MCF 10A (cell line): ENCODE measurements at regions of chr12 and their contacts with region 1.

Region 1: DNA sequence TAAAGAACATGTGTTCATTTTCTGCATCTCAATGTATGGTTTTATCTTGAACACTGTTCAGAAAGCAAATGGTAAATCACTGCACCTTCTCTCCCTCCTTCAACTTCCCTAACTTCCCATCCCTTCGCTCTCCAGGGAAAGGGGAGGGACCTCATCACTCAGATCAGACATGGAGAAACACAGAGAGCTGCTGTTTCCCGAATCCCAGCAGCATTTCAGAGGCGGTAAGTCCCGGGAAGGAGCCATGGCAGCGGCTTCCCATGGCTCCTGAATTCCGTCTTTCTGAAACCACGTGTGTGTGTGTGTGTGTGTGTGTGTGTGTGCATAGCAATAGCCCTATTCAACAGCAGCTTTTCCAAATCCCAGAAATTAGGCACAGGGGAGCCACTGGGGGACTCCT is 125.4 kb upstream of the TMCC3 start:
- DNase-seq: no peak
- H3K4me3 Mint-ChIP-seq: no peak overlapping the region
- H3K27ac Mint-ChIP-seq: no peak overlapping the region
- H3K4me1 Mint-ChIP-seq: peaks cover 6% of the 10 kb centered on the region
- H3K27me3 Mint-ChIP-seq: peaks cover 39% of the 10 kb centered on the region
- CTCF ChIP-seq: no peak

Region 2: DNA sequence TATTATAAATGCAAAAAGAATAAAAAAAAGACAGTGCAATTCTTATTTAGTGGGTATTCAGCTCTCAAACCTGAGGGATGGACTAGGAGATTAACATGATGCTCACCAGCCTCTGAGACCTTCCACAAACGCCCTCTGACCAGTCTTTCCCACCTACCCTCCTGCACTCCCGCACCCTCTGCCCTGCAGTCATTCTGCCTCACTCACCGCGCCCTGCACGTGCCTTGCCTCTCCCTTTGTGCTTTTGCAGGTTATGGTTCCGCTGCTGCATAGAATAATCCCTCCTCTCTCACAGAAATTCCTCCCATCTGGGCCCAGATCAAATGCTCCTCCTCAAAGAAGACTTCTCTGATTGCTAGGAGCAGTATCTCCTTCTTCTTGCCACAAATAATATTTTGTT is 96.9 kb before region 1 on chr12:
- CTCF ChIA-PET with region 1: no interaction called
- POLR2A ChIA-PET with region 1: no interaction called
- intact Hi-C with region 1: no loop called
- DNase-seq: no peak
- H3K4me3 Mint-ChIP-seq: no peak overlapping the region
- H3K27ac Mint-ChIP-seq: no peak overlapping the region
- H3K4me1 Mint-ChIP-seq: no peaks in the 10 kb centered on the region
- H3K27me3 Mint-ChIP-seq: no peaks in the 10 kb centered on the region
- CTCF ChIP-seq: no peak

Region 3: DNA sequence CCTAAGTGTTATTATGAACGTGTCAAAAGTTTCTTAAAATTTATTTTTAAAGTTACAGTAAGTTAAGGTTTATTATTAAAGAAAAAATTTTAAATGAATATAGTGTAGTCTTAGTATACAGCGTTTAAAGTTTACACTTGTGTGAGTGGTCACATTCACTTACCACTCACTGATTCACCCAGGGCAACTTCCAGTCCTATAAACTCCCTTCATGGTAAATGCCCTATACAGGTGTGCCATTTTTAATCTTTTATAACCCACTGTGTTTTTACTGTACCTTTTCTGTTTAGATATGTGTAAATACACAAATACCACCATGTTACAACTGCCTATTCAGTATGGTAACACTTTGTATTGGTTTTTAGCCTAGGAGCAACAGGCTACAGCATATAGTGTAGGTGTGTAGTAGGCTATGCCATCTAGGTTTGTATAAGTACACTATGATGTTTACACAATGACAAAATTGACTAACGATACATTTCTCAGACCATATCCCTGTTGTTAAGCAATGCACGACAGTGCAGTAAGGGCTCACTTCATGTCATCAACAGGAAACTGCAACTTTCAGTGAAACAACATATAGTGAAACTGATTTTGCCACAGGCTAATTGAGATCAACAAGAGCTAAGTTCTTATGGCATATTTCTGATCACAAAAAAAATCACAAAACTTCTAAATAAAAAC is 13.3 kb before region 1 on chr12:
- CTCF ChIA-PET with region 1: interaction called, 12 read pairs
- POLR2A ChIA-PET with region 1: interaction called, 3 read pairs
- intact Hi-C with region 1: no loop called
- DNase-seq: peak; percentile 50
- H3K4me3 Mint-ChIP-seq: no peak overlapping the region
- H3K27ac Mint-ChIP-seq: peak overlapping the region; percentile 92
- H3K4me1 Mint-ChIP-seq: peaks cover 7% of the 10 kb centered on the region
- H3K27me3 Mint-ChIP-seq: no peaks in the 10 kb centered on the region
- CTCF ChIP-seq: no peak

Region 4: GRCh38 chr12:94789510-94790225 is 14.0 kb after region 1 on chr12:
- CTCF ChIA-PET with region 1: no interaction called
- POLR2A ChIA-PET with region 1: no interaction called
- intact Hi-C with region 1: no loop called
- DNase-seq: no peak
- H3K4me3 Mint-ChIP-seq: no peak overlapping the region
- H3K27ac Mint-ChIP-seq: no peak overlapping the region
- H3K4me1 Mint-ChIP-seq: no peaks in the 10 kb centered on the region
- H3K27me3 Mint-ChIP-seq: peaks cover 22% of the 10 kb centered on the region
- CTCF ChIP-seq: no peak

Region 5: GRCh38 chr12:94898388-94898787 is 122.7 kb after region 1 on chr12:
- CTCF ChIA-PET with region 1: no interaction called
- POLR2A ChIA-PET with region 1: no interaction called
- intact Hi-C with region 1: no loop called
- DNase-seq: peak; percentile 11
- H3K4me3 Mint-ChIP-seq: no peak overlapping the region
- H3K27ac Mint-ChIP-seq: no peak overlapping the region
- H3K4me1 Mint-ChIP-seq: peaks cover 5% of the 10 kb centered on the region
- H3K27me3 Mint-ChIP-seq: peaks cover 7% of the 10 kb centered on the region
- CTCF ChIP-seq: no peak